Caco-2 (cell line): ENCODE measurements at regions of chr3 and their contacts with region 1.

Region 1: GRCh38 chr3:52851348-52851747 is 16.5 kb upstream of the MUSTN1 start:
- DNase-seq: peak; percentile 54 to 79
- H3K4me3 ChIP-seq: no peak overlapping the region
- H3K4me3 Mint-ChIP-seq: no peak overlapping the region
- H3K27ac Mint-ChIP-seq: no peak overlapping the region
- H3K4me1 ChIP-seq: no peaks in the 10 kb centered on the region
- H3K4me1 Mint-ChIP-seq: peaks cover 11% of the 10 kb centered on the region
- H3K27me3 ChIP-seq: no peaks in the 10 kb centered on the region
- H3K27me3 Mint-ChIP-seq: no peaks in the 10 kb centered on the region
- CTCF ChIP-seq: peak; percentile 64 to 80

Region 2: GRCh38 chr3:52670621-52671521 is 180.5 kb before region 1 on chr3:
- CTCF ChIA-PET with region 1: no interaction called
- POLR2A ChIA-PET with region 1: no interaction called
- intact Hi-C with region 1: no loop called
- DNase-seq: no peak
- H3K4me3 ChIP-seq: no peak overlapping the region
- H3K4me3 Mint-ChIP-seq: no peak overlapping the region
- H3K27ac Mint-ChIP-seq: no peak overlapping the region
- H3K4me1 ChIP-seq: no peaks in the 10 kb centered on the region
- H3K4me1 Mint-ChIP-seq: no peaks in the 10 kb centered on the region
- H3K27me3 ChIP-seq: no peaks in the 10 kb centered on the region
- H3K27me3 Mint-ChIP-seq: no peaks in the 10 kb centered on the region
- CTCF ChIP-seq: no peak

Region 3: GRCh38 chr3:52867098-52867800 is 15.9 kb after region 1 on chr3:
- CTCF ChIA-PET with region 1: no interaction called
- POLR2A ChIA-PET with region 1: no interaction called
- intact Hi-C with region 1: no loop called
- DNase-seq: no peak
- H3K4me3 ChIP-seq: no peak overlapping the region
- H3K4me3 Mint-ChIP-seq: no peak overlapping the region
- H3K27ac Mint-ChIP-seq: no peak overlapping the region
- H3K4me1 ChIP-seq: no peaks in the 10 kb centered on the region
- H3K4me1 Mint-ChIP-seq: peaks cover 9% of the 10 kb centered on the region
- H3K27me3 ChIP-seq: no peaks in the 10 kb centered on the region
- H3K27me3 Mint-ChIP-seq: no peaks in the 10 kb centered on the region
- CTCF ChIP-seq: no peak

Region 4: DNA sequence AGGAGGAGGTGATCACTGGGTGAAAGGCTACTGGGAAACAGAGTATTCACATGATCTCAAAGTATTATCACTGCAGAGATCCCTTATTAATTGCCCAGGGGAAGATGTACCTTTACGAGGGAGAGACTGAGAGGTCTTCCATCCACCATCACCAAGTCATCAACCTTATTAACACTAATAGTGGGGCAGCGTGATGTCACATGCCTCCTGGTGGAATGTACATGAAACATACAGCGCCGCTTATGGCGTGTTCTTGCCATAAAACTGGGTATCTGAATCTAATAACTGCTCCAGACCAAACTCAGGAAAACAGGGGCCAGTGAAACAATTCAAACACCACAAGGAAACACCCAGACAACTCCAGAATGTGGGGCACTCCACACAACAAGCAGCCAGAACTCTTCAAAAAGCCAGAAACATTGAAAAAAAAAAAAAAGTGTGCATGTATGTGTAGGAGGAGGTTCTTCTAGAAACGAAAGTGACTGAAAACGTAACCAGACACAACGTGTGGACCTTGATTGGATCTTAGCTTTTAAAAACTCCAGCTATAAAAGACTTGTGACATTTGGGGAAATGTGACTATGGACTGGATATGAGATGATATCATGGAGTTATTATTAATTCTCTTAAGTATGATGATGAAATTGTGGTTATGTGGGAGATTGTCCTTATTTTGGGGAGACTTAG is 41.4 kb after region 1 on chr3:
- CTCF ChIA-PET with region 1: no interaction called
- POLR2A ChIA-PET with region 1: no interaction called
- intact Hi-C with region 1: loop called (anchors 5 kb)
- DNase-seq: no peak
- H3K4me3 ChIP-seq: no peak overlapping the region
- H3K4me3 Mint-ChIP-seq: no peak overlapping the region
- H3K27ac Mint-ChIP-seq: no peak overlapping the region
- H3K4me1 ChIP-seq: 0 out of 2 replicates have a peak, but pooled peaks cover 4% of the 10 kb centered on the region
- H3K4me1 Mint-ChIP-seq: peaks cover 15% of the 10 kb centered on the region
- H3K27me3 ChIP-seq: no peaks in the 10 kb centered on the region
- H3K27me3 Mint-ChIP-seq: no peaks in the 10 kb centered on the region
- CTCF ChIP-seq: no peak

Region 5: DNA sequence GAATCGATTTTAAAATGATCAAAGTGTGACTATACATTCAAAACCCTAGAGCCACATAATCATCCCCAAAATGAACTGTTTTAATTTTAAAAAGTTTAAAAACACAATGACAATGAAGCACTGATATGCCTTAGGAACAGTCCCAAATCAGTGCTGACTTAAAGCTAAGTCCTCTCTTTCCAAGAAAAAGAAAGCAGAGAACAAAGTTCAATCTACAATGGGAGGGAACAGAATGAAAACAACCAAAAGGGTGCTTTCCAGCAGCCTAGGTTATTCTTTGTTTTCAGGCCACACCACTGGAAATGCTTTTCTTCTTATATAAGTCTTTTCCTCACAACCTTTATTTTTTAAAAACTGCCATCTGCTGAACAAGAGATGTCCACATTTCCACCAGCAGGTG is 53.2 kb after region 1 on chr3:
- CTCF ChIA-PET with region 1: no interaction called
- POLR2A ChIA-PET with region 1: no interaction called
- intact Hi-C with region 1: loop called (anchors 2 kb)
- DNase-seq: no peak
- H3K4me3 ChIP-seq: no peak overlapping the region
- H3K4me3 Mint-ChIP-seq: no peak overlapping the region
- H3K27ac Mint-ChIP-seq: no peak overlapping the region
- H3K4me1 ChIP-seq: no peaks in the 10 kb centered on the region
- H3K4me1 Mint-ChIP-seq: no peaks in the 10 kb centered on the region
- H3K27me3 ChIP-seq: no peaks in the 10 kb centered on the region
- H3K27me3 Mint-ChIP-seq: no peaks in the 10 kb centered on the region
- CTCF ChIP-seq: no peak

Region 6: DNA sequence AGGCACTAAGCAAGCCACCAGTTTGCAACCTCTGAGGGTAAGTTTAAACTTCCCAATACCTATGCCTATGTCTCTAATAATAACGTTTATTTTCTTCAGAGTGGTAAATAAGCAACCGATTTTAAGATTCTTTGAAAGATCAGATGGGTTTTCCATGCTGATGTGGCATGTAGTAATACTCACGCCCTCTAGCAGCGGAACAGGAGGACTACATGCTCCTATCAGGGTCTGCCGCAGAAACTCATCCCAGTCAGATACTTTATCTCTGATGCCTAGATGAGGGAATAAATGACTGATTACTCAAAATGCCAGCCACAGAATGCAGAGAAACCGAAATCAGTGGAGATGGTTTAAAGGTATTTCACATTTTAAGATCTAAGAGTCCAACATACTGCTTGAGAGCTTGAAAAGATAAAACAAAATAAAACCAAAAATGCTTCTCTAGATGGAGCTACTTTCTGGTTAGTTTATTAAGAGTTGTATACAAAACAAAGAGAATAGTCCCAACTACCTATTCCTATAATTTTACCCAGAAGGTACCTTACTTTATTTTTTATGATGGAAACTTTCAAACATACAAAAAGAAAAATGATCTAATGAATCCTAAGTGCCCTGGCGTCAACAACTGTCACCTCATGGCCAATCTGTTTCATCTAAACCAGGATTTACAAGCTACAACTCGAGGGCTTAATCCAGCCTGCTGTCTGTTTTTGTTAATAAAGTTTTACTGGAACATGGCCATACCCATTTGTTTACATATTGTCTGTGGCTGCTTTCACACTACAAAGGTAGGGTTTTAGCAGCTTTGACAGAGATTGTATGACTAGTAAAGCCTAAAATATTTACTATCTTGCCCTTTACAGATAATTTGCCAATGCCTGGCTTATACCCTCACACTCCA is 83.5 kb after region 1 on chr3:
- CTCF ChIA-PET with region 1: interaction called, 4 read pairs
- POLR2A ChIA-PET with region 1: interaction called, 3 read pairs
- intact Hi-C with region 1: loop called (anchors 1 kb)
- DNase-seq: peak; percentile 51 to 52
- H3K4me3 ChIP-seq: no peak overlapping the region
- H3K4me3 Mint-ChIP-seq: no peak overlapping the region
- H3K27ac Mint-ChIP-seq: no peak overlapping the region
- H3K4me1 ChIP-seq: no peaks in the 10 kb centered on the region
- H3K4me1 Mint-ChIP-seq: no peaks in the 10 kb centered on the region
- H3K27me3 ChIP-seq: no peaks in the 10 kb centered on the region
- H3K27me3 Mint-ChIP-seq: no peaks in the 10 kb centered on the region
- CTCF ChIP-seq: peak; percentile 69 to 87

Region 7: GRCh38 chr3:53072653-53073552 is 221.6 kb after region 1 on chr3:
- CTCF ChIA-PET with region 1: no interaction called
- POLR2A ChIA-PET with region 1: no interaction called
- intact Hi-C with region 1: loop called (anchors 1 kb)
- DNase-seq: peak; percentile 87 to 90
- H3K4me3 ChIP-seq: peak overlapping the region; percentile 51
- H3K4me3 Mint-ChIP-seq: peak overlapping the region; percentile 76
- H3K27ac Mint-ChIP-seq: peak overlapping the region; percentile 50
- H3K4me1 ChIP-seq: peaks cover 11% of the 10 kb centered on the region
- H3K4me1 Mint-ChIP-seq: peaks cover 8% of the 10 kb centered on the region
- H3K27me3 ChIP-seq: no peaks in the 10 kb centered on the region
- H3K27me3 Mint-ChIP-seq: no peaks in the 10 kb centered on the region
- CTCF ChIP-seq: peak; percentile 90 to 96